ENCODE measurements at regions of chr6 and their contacts with region 1.

Region 1: DNA sequence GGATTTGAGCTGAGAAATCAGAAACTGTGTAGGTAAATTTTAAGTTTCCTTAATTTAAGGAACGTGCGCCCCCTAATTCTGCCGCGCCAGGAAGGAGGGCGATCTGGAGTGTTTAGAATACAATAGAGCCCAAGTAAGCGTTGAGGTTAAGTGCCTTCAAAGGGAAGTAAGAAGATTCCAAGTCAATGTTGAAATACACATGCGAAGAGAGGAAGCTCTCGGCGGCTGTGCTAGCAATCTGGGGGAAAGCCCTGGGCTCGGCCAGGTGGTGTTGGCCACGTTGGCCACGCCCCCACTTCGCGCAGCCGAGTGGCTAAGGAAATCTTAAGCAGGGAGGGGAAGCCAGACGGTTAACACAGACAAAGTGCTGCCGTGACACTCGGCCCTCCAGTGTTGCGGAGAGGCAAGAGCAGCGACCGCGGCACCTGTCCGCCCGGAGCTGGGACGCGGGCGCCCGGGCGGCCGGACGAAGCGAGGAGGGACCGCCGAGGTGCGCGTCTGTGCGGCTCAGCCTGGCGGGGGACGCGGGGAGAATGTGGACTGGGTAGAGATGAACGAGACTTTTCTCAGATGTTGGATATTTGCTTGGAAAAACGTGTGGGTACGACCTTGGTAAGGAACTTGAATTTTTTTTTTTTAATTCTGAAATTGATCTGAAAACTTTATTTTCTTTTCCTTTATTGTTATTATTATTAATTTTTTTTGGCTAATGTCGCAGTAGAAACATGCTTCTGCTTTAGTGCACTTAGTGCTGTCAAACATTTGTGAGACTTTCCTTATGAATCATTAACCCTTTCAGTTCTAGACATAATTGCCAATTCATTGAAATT is at the start of gene PRDM1:
- DNase-seq: peak; percentile 87
- ATAC-seq: peak; percentile 82
- H3K4me3 ChIP-seq: peak within 1 kb of the TSS; percentile 86
- H3K27ac ChIP-seq: peak within 1 kb of the TSS; percentile 68
- H3K4me1 ChIP-seq: peaks cover 52% of the 10 kb centered on the region
- H3K27me3 ChIP-seq: no peaks in the 10 kb centered on the region
- CTCF ChIP-seq: peak; percentile 28; the same call in 1 of the 2 replicates
- total RNA-seq, gene PRDM1: 2.0 and 2.5 TPM in 2 replicates

Region 2: DNA sequence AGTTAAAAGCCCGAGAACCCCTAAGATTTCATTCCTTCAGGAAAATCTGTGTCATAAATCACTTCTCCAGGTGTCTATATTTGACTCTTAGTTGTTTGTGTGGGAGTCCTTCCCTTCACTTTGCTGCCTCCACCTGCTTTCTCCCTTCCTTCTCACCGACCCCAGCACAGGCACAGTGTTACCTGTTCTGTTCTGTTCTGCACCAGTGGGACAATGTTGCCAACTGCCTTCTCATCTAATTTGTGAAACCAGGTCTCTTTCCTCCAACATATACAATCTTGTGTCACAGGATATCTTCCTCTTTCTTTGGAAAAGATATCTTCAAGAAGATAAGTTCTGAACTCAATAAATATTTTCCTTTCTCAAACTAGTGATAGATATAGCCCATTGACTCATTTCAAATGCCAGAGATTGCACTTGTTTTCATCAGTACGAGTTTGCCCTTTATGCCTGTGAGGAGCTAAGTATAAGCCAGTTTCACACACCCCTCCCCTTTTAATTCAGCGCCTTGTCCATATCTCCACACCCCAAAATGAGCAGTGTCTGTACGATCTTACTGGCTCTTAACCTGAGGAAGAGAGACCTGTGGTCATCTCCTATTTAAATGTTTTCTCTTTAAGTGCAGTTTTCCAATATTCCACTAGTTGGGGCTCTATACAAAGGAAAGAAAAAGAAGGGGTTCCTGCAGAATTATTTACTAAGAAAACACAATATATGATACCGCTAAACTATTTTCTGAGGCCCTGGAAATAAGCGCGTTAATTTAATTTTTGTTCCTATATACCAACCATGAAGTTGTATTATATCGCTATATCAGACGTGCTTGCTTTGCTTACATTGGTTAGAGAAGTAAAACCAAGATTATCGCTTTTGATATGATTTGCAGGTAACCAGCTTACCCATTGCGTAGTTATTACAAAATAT is 601.7 kb before region 1 on chr6:
- CTCF ChIA-PET with region 1: no interaction called
- POLR2A ChIA-PET with region 1: no interaction called
- intact Hi-C with region 1: loop called (anchors 1 kb)
- DNase-seq: peak; percentile 79
- ATAC-seq: peak; percentile 68
- H3K4me3 ChIP-seq: no peak overlapping the region
- H3K27ac ChIP-seq: 0 out of 2 replicates have a peak overlapping the region, but pooled peaks have one; percentile 4
- H3K4me1 ChIP-seq: peaks cover 24% of the 10 kb centered on the region
- H3K27me3 ChIP-seq: no peaks in the 10 kb centered on the region
- CTCF ChIP-seq: peak; percentile 88

Region 3: DNA sequence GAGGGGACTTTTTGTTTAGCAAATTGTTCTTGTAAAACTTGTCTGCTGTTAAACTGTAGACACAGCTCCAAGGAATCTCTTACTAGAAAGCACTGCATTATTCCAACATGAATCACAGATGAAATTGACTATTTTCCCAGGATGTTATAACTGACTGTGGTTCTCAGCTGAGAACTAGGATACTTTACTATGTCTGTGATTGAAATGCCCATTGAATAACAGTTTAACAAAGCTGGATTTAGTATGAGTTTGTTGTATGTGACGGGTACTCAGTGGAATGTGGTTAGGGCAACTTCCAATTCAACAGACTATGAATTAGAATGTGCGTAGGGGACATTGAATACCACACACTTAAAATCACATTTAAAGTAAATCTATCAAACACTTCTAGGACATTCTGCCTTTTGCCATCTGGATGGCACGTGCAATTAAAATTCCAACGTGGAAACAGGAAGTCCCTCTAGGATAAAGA is 489.9 kb before region 1 on chr6:
- CTCF ChIA-PET with region 1: no interaction called
- POLR2A ChIA-PET with region 1: no interaction called
- intact Hi-C with region 1: loop called (anchors 5 kb)
- DNase-seq: peak; percentile 95
- ATAC-seq: peak; percentile 70
- H3K4me3 ChIP-seq: no peak overlapping the region
- H3K27ac ChIP-seq: peak overlapping the region; percentile 99
- H3K4me1 ChIP-seq: peaks cover 79% of the 10 kb centered on the region
- H3K27me3 ChIP-seq: no peaks in the 10 kb centered on the region
- CTCF ChIP-seq: no peak

Region 4: DNA sequence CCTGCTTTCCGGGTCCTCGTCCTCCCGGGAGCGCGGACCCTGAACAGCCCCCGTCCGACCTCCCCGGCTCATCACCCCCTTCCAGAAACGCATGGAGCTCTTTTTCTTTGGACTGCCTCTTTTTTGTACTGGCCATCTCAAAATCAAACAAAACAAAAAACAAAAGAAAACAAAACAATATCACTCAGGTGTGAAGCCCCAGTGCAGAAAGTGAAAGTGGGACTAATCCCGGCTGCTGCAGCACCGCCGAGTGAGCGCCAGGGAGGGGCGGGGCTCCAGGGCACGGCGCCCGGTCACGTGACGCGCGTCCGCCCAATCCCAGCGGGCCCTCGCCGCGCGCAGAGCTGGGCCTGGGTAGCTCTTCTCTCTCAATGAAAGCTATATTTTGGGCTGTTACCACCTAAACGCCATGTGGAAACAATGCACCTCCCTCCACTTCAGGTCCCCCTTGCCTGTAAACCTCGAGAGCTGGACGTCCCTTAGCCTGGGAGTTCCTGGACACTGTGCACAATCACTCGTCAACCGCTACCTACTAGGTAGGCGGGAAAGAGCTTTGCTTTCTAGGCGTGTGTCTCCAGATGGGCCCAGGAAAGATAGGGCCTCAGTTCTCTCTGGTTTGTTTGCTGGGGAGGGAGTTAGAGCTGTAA is 93.8 kb before region 1 on chr6:
- CTCF ChIA-PET with region 1: no interaction called
- POLR2A ChIA-PET with region 1: no interaction called
- intact Hi-C with region 1: loop called (anchors 5 kb)
- DNase-seq: peak; percentile 72
- ATAC-seq: peak; percentile 93
- H3K4me3 ChIP-seq: peak overlapping the region; percentile 85
- H3K27ac ChIP-seq: no peak overlapping the region
- H3K4me1 ChIP-seq: 0 out of 2 replicates have a peak, but pooled peaks cover 14% of the 10 kb centered on the region
- H3K27me3 ChIP-seq: no peaks in the 10 kb centered on the region
- CTCF ChIP-seq: no peak

Region 5: GRCh38 chr6:106223300-106223930 is 137.2 kb after region 1 on chr6:
- CTCF ChIA-PET with region 1: interaction called, 8 read pairs
- POLR2A ChIA-PET with region 1: no interaction called
- intact Hi-C with region 1: loop called (anchors 2 kb)
- DNase-seq: peak; percentile 81
- ATAC-seq: peak; percentile 57; the same call in 1 of the 2 replicates
- H3K4me3 ChIP-seq: no peak overlapping the region
- H3K27ac ChIP-seq: no peak overlapping the region
- H3K4me1 ChIP-seq: peaks cover 21% of the 10 kb centered on the region
- H3K27me3 ChIP-seq: no peaks in the 10 kb centered on the region
- CTCF ChIP-seq: peak; percentile 78

Measured in PC-3 (cell line).